Vagina (tissue), 2 donors: ENCODE measurements at regions of chr10 and their contacts with region 1.

Region 1: GRCh38 chr10:30059209-30060107 is at the start of gene JCAD:
- DNase-seq: no peak
- H3K4me3 ChIP-seq: peak within 1 kb of the TSS; percentile 70 to 99
- H3K27ac ChIP-seq: peak within 1 kb of the TSS; percentile 73
- H3K4me1 ChIP-seq: peaks cover 12% of the 10 kb centered on the region
- H3K27me3 ChIP-seq: no peaks in the 10 kb centered on the region
- CTCF ChIP-seq: peak in 1 of 3 experiments; percentile 11
- POLR2A ChIP-seq: no peak
- total RNA-seq, gene JCAD: 40.3 TPM

Region 2: GRCh38 chr10:29735596-29736318 is 323.7 kb before region 1 on chr10:
- intact Hi-C with region 1: loop called (anchors 5 kb)
- DNase-seq: peak in 1 of 2 donors; percentile 95
- H3K4me3 ChIP-seq: peak overlapping the region; percentile 77 to 80
- H3K27ac ChIP-seq: peak overlapping the region; percentile 99
- H3K4me1 ChIP-seq: peaks cover 44% of the 10 kb centered on the region
- H3K27me3 ChIP-seq: no peaks in the 10 kb centered on the region
- CTCF ChIP-seq: peak; percentile 45 to 93 (median 83)
- POLR2A ChIP-seq: peak in 1 of 2 donors; percentile 61

Region 3: GRCh38 chr10:30088178-30088577 is 28.7 kb after region 1 on chr10:
- intact Hi-C with region 1: loop called (anchors 2 kb)
- DNase-seq: no peak
- H3K4me3 ChIP-seq: no peak overlapping the region
- H3K27ac ChIP-seq: no peak overlapping the region
- H3K4me1 ChIP-seq: no peaks in the 10 kb centered on the region
- H3K27me3 ChIP-seq: no peaks in the 10 kb centered on the region
- CTCF ChIP-seq: no peak
- POLR2A ChIP-seq: no peak

Region 4: GRCh38 chr10:30294479-30295240 is 235.2 kb after region 1 on chr10:
- intact Hi-C with region 1: no loop called
- DNase-seq: no peak
- H3K4me3 ChIP-seq: no peak overlapping the region
- H3K27ac ChIP-seq: no peak overlapping the region
- H3K4me1 ChIP-seq: no peaks in the 10 kb centered on the region
- H3K27me3 ChIP-seq: no peaks in the 10 kb centered on the region
- CTCF ChIP-seq: no peak
- POLR2A ChIP-seq: no peak